Activated T-helper 2 cell treated with anti-CD3 and anti-CD28 coated beads, Interferon-gamma antibody, Interleukin-2, Interleukin-4, amounts not matched to agents 10 μg/mL and 5 μg/mL and 100 μg/mL, durations not matched to agents 14 hours and 24 hours and 36 hours (primary cell): ENCODE measurements at regions of chr14 and their contacts with region 1.

Region 1: DNA sequence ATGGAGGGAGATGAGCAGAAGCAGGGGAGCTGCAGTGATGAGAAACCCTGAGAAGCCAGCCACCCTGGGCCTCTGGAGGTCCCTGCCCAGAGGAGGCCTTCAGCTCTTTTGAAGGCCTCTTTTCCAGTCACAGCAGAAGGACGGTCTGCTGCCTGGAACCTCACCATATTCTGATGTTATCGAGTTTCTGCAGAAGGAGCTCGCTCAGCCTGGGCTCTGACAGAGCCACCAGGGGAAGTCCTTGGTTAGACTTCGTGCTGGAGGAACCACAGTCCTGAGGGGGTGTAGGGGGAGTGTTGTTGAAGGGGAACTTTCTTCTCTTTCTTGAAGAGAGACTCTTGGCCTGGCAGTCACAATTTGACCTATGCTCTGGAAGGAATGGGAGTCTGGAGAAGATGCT is 25.1 kb upstream of the BATF start:
- DNase-seq: peak; percentile 58
- H3K4me3 Mint-ChIP-seq: peak overlapping the region; percentile 73
- H3K27ac Mint-ChIP-seq: peak overlapping the region; percentile 96
- H3K4me1 Mint-ChIP-seq: peaks cover 67% of the 10 kb centered on the region
- H3K27me3 Mint-ChIP-seq: no peaks in the 10 kb centered on the region

Region 2: GRCh38 chr14:75069811-75070782 is 427.1 kb before region 1 on chr14:
- intact Hi-C with region 1: no loop called
- DNase-seq: no peak
- H3K4me3 Mint-ChIP-seq: peak overlapping the region; percentile 23
- H3K27ac Mint-ChIP-seq: peak overlapping the region; percentile 34
- H3K4me1 Mint-ChIP-seq: peaks cover 2% of the 10 kb centered on the region
- H3K27me3 Mint-ChIP-seq: no peaks in the 10 kb centered on the region

Region 3: DNA sequence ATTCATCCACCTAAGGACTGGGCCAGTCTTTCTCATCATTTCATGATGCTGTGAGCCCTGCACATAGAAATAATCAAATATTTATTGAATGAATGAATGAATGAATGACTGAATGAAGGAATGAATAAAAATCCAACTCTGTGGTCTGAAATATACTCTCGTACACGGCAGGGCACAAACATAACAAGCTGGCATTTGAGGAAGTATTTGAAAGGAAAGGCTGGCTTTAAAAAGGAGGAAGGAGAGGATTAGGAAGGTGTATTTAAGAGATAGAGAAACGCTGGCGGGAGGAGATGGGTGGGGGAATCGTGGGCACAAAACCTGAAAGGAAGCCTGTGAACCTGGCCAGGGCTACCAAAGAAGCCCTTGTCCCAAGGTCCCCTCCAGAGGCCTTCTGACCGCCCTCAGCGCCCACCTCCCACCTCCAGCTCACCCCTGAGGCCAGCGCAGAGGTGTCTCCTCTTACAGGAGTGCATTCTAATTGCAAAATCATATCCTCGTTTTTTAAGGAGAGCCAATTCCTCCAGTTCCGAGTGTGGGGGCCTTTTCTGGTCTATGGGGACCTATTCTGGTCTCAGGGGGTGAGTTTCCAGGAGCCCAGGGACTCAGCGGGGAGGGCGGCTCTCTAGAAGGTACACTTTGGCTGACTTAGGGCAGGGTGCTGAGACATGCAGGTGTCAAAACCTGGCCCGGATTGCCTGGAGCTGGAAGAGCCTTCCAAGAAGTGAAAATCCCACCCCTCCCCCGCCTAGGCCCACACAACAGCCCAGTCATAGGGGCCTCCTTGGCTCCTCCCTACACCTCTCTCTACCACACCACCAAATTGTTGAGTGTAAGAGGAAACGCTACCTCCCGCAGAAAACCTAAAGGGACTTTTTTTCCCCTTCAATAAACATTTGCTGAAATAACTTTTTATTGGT is 78.1 kb before region 1 on chr14:
- intact Hi-C with region 1: loop called (anchors 2 kb)
- DNase-seq: peak; percentile 35
- H3K4me3 Mint-ChIP-seq: peak overlapping the region; percentile 5
- H3K27ac Mint-ChIP-seq: peak overlapping the region; percentile 38
- H3K4me1 Mint-ChIP-seq: peaks cover 25% of the 10 kb centered on the region
- H3K27me3 Mint-ChIP-seq: no peaks in the 10 kb centered on the region

Region 4: DNA sequence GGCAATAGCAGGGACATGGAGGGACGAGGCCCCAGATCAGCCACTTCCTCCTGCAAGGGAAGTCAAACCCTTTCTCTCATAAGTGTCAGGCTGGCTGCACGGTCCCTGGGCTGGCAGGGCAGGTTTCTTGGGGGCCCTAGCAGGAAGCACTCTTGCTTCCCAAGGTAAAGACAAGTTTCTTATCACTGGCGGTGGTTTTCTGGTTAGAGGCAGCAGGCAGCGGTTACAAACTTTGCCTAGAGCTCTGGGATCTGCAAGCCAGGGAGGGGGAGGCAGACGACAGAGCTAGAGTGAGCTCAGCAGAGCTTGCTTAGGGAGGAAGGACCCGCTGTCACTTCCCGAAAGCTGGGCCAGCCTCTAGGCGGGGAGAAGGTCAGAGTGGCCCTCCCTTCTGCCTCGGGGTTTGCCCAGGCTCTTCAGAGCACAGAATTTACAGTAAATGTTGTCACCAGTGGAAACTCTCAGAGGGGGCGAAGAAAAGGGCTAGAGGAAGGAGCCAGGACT is 45.4 kb after region 1 on chr14:
- intact Hi-C with region 1: loop called (anchors 1 kb)
- DNase-seq: peak; percentile 73
- H3K4me3 Mint-ChIP-seq: peak overlapping the region; percentile 61
- H3K27ac Mint-ChIP-seq: peak overlapping the region; percentile 97
- H3K4me1 Mint-ChIP-seq: peaks cover 57% of the 10 kb centered on the region
- H3K27me3 Mint-ChIP-seq: no peaks in the 10 kb centered on the region

Region 5: DNA sequence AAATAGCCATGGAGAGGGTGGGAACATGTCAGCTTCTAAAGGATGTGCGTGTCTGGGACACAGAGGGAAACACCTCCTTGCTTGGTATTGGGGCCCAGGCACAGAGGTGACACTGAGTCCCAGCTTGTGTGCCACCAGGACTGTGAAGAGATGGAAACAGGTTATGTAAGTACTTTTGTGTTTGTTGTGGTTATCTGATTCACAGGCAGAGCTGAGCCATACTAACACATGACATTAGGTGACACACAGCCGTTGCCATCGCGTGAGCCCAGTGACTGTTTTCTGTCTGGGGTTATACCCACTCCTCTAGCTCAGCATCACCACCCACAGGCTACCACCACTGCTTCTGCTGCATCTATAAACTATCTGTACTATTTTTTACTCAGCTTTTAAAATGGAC is 69.1 kb after region 1 on chr14:
- intact Hi-C with region 1: loop called (anchors 1 kb)
- DNase-seq: peak; percentile 72
- H3K4me3 Mint-ChIP-seq: peak overlapping the region; percentile 47
- H3K27ac Mint-ChIP-seq: peak overlapping the region; percentile 85
- H3K4me1 Mint-ChIP-seq: peaks cover 65% of the 10 kb centered on the region
- H3K27me3 Mint-ChIP-seq: no peaks in the 10 kb centered on the region